Dendritic cell treated with granulocyte-macrophage colony-stimulating factor and Interleukin-4, amounts not matched to agents 40 ng/mL and 50 ng/mL, for 4 days (primary cell): ENCODE measurements at regions of chr2 and their contacts with region 1.

Region 1: GRCh38 chr2:134782792-134783191 is 55.6 kb upstream of the ACMSD start:
- H3K4me3 Mint-ChIP-seq: no peak overlapping the region
- H3K27ac Mint-ChIP-seq: no peak overlapping the region
- H3K4me1 Mint-ChIP-seq: peaks cover 38% of the 10 kb centered on the region
- H3K27me3 Mint-ChIP-seq: peaks cover 1% of the 10 kb centered on the region

Region 2: GRCh38 chr2:134482131-134482723 is 300.6 kb before region 1 on chr2:
- intact Hi-C with region 1: no loop called
- H3K4me3 Mint-ChIP-seq: no peak overlapping the region
- H3K27ac Mint-ChIP-seq: no peak overlapping the region
- H3K4me1 Mint-ChIP-seq: no peaks in the 10 kb centered on the region
- H3K27me3 Mint-ChIP-seq: no peaks in the 10 kb centered on the region

Region 3: DNA sequence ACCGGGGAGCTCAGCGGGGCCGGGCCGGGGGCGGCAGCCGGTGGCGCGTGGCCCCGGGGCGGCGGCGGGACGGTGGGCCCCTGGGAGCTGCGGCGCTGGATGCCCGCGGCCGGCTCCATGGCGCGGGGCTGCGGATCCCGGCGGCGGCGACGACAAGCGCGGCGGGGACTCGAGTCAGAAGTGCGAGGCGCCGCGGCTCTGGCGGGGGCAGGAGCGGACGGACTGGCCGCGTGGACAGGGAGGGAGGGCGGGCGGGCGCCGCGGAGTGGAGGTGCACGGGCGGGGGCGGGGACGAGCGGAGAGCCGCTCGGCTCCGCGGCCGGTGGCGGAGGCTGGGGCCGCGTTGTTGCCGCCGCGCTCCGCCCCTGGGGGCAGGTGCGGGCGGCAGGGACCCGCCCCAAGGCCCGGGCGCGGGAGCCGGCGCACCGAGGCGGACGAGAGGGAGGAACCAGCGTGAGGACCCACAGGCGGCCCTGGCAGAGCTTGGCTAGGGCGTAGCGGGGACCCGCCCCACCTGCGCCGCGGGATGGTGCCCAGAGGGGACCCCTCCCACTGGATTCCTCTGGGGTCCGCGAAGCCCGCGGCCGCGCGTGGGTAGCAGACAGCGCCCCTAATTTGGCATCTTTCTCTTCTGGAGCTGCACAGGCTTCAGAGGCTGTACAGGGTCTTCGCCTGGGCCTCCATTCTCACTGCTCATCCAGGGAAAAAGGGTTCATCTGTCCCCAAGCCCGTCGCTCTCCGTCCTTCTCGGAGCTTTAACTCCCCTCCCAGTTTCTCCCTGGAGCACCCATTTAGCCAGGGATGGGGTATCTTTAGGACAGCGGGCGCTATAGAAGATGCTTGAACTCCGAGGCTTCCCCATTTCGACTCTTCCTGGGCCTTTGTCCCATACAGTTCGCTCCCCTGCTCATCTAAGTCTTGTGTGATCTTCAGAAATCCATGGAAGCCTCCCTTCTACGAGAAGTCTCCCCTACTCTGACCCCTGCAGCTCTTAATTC is 63.7 kb before region 1 on chr2 and contains the start of gene TMEM163:
- intact Hi-C with region 1: loop called (anchors 10 kb)
- H3K4me3 Mint-ChIP-seq: peak within 1 kb of the TSS; percentile 82
- H3K27ac Mint-ChIP-seq: peak within 1 kb of the TSS; percentile 45
- H3K4me1 Mint-ChIP-seq: peaks cover 26% of the 10 kb centered on the region
- H3K27me3 Mint-ChIP-seq: peaks cover 83% of the 10 kb centered on the region

Region 4: DNA sequence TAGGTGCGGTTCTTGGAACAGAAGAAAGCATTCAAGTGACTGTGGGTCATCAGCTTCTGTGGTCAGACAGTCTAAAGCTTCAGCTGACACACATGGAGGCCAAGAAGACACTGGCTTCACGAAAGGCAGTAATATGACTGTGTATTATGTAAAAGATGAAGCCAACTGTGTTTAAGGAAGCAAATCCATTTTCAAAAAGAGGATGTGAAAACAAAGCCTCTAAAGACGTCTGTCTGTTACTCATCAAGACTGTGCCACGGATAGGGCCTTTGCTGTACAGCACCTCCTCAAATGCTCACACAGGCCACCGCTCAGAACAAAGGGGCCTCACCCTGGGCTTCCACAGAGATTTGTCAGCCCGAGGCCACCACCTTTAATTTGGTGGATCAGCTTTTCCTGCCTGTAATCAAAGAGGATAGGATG is 42.9 kb before region 1 on chr2:
- intact Hi-C with region 1: loop called (anchors 5 kb)
- H3K4me3 Mint-ChIP-seq: no peak overlapping the region
- H3K27ac Mint-ChIP-seq: peak overlapping the region; percentile 65
- H3K4me1 Mint-ChIP-seq: peaks cover 59% of the 10 kb centered on the region
- H3K27me3 Mint-ChIP-seq: peaks cover 18% of the 10 kb centered on the region

Region 5: DNA sequence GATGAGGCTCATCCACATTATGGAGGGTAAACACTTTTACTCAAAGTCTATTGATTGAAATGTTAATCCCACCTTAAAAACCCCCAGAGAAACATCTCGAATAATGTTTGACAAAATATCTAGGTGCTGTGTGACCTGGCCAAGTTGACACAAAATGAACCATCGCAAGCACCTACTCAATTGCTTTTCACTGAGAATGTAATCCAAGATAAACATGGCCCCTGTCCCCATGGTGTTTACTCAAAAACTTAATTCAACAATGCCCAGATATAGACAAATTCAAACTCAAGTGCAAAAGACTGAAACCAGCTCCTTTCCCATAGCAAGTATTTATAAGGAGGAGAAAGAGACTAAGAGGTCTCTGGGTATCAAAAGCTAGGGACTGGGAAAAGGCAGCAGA is 40.6 kb after region 1 on chr2:
- intact Hi-C with region 1: no loop called
- H3K4me3 Mint-ChIP-seq: no peak overlapping the region
- H3K27ac Mint-ChIP-seq: no peak overlapping the region
- H3K4me1 Mint-ChIP-seq: no peaks in the 10 kb centered on the region
- H3K27me3 Mint-ChIP-seq: peaks cover 2% of the 10 kb centered on the region